Naive thymus-derived CD4-positive, alpha-beta T cell (primary cell): ENCODE measurements at regions of chr9 and their contacts with region 1.

Region 1: GRCh38 chr9:76393963-76394679 is at the start of gene RFK:
- DNase-seq: peak; percentile 89 to 99 (median 95)
- ATAC-seq: peak; percentile 97
- H3K4me3 ChIP-seq: peak within 1 kb of the TSS; percentile 92
- H3K4me3 Mint-ChIP-seq: peak within 1 kb of the TSS; percentile 94 to 100 (median 97)
- H3K27ac ChIP-seq: peak within 1 kb of the TSS; percentile 93
- H3K27ac Mint-ChIP-seq: peak within 1 kb of the TSS; percentile 95 to 99 (median 98)
- H3K4me1 ChIP-seq: peaks cover 10 to 13% of the 10 kb centered on the region in 2 donors
- H3K4me1 Mint-ChIP-seq: peaks cover 16 to 37% (median 33%) of the 10 kb centered on the region in 7 donors
- H3K27me3 ChIP-seq: no peaks in the 10 kb centered on the region
- H3K27me3 Mint-ChIP-seq: no peaks in the 10 kb centered on the region
- total RNA-seq, gene RFK: 6.8 to 18.6 (median 11.3) TPM

Region 2: DNA sequence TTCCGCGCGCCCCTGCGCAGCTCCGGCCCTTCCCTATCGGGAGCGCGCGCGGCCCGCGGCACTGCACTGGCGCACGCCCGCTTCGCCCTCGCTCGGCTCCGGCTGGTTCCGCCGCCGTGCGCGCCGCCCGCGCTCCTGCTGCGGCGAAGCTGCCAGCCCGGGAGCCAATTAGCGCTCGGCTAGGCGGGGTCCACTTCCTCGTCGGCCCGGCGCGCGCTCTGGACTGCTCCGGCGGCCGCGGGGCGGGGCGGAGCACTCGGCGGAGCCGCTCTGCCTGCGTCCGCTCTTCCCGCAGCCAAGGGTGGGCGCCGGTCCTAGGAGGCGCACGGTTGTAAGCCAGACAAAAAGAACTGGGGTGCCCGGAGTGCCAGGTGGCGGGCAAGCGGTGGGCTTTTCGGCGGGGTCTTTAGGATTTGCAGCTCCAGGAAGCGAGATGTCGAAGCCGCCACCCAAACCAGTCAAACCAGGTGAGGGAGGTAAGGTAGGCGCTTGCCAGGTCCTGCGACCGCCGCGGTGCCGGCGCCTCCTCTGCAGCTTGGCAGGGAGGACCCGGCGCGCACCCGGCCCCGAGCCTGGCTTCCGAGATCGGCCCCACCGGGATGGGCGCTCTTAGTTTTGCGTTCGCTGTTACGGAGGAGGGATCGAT is 1305.7 kb before region 1 on chr9 and contains the start of gene OSTF1:
- CTCF ChIA-PET with region 1: interaction called, 4 read pairs
- POLR2A ChIA-PET with region 1: no interaction called
- intact Hi-C with region 1: loop called (anchors 1 to 2 kb)
- DNase-seq: peak; percentile 89 to 95 (median 95)
- ATAC-seq: peak; percentile 93
- H3K4me3 ChIP-seq: peak within 1 kb of the TSS; percentile 76
- H3K4me3 Mint-ChIP-seq: peak within 1 kb of the TSS; percentile 89 to 100 (median 99)
- H3K27ac ChIP-seq: peak within 1 kb of the TSS; percentile 92
- H3K27ac Mint-ChIP-seq: peak within 1 kb of the TSS; percentile 91 to 98 (median 94)
- H3K4me1 ChIP-seq: peaks cover 29 to 49% of the 10 kb centered on the region in 2 donors
- H3K4me1 Mint-ChIP-seq: peaks cover 58 to 82% (median 78%) of the 10 kb centered on the region in 7 donors
- H3K27me3 ChIP-seq: no peaks in the 10 kb centered on the region
- H3K27me3 Mint-ChIP-seq: no peaks in the 10 kb centered on the region
- total RNA-seq, gene OSTF1: 38.7 to 93.5 (median 46.2) TPM

Region 3: DNA sequence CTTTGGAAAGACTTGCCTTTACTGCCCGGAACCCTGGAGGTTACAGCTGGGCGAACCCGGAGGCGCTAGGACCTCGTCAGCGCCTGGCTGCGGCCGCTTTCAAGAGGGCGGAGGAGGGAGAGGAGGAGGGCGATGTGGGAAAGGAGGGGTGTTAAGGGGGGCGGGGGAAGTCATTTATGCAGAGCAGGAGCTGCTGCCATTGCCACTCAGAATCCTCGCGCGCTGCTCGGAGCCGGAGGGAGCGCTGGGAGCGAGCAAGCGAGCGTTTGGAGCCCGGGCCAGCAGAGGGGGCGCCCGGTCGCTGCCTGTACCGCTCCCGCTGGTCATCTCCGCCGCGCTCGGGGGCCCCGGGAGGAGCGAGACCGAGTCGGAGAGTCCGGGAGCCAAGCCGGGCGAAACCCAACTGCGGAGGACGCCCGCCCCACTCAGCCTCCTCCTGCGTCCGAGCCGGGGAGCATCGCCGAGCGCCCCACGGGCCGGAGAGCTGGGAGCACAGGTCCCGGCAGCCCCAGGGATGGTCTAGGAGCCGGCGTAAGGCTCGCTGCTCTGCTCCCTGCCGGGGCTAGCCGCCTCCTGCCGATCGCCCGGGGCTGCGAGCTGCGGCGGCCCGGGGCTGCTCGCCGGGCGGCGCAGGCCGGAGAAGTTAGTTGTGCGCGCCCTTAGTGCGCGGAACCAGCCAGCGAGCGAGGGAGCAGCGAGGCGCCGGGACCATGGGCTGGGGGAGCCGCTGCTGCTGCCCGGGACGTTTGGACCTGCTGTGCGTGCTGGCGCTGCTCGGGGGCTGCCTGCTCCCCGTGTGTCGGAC is 503.4 kb before region 1 on chr9 and contains the start of gene PCSK5:
- CTCF ChIA-PET with region 1: no interaction called
- POLR2A ChIA-PET with region 1: interaction called, 8 read pairs
- intact Hi-C with region 1: loop called (anchors 1 kb)
- DNase-seq: peak; percentile 65 to 94 (median 90)
- ATAC-seq: peak; percentile 95
- H3K4me3 ChIP-seq: peak within 1 kb of the TSS; percentile 70
- H3K4me3 Mint-ChIP-seq: peak within 1 kb of the TSS; percentile 91 to 99 (median 97)
- H3K27ac ChIP-seq: peak within 1 kb of the TSS; percentile 77
- H3K27ac Mint-ChIP-seq: peak within 1 kb of the TSS; percentile 81 to 95 (median 90)
- H3K4me1 ChIP-seq: peaks cover 0 to 15% of the 10 kb centered on the region in 2 donors
- H3K4me1 Mint-ChIP-seq: peaks cover 35 to 59% (median 49%) of the 10 kb centered on the region in 7 donors
- H3K27me3 ChIP-seq: no peaks in the 10 kb centered on the region
- H3K27me3 Mint-ChIP-seq: peaks cover 0 to 50% (median 0%) of the 10 kb centered on the region in 5 donors
- total RNA-seq, gene PCSK5: 5.2 to 35.0 (median 24.6) TPM

Region 4: DNA sequence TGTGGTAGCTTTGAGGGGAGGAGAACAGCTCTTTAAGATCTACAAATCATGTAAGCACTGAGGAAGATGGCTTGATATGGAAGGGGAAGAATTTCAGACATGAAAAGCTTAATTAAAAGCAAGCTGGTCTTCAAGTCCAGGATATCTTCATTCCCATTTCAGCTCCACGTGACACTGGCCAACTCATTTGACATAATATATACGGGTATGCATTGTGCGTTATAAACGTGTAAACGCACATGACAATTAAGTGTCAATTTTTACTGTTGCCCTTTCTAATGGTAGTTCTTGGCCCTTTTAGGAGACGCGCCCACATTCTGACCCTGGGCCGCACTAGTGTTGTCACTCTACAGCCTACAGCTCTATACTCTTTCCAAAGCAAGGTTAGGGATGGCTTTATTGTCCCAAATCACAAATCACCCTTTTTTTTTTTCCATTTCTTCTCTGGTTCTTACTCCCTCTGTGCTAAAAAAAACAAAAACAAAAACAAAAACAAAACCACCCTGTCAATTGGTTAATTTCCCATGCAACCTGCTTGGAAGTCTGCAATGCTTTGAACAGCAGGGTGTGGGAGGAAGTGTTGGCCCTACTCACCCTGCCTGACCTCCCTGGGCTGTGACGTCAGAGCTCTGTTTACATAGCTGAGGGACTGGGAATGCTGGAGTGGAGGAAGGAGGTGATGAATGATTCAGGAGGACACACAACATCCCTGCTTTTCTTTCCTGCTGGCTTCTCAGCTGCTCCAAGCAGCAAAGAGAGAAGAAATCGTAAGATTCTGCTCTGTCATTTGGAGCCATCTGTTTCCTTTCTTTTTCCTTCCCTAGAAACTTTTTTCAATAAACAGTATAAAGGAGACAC is 19.2 kb before region 1 on chr9:
- CTCF ChIA-PET with region 1: no interaction called
- POLR2A ChIA-PET with region 1: no interaction called
- intact Hi-C with region 1: no loop called
- DNase-seq: no peak
- ATAC-seq: no peak
- H3K4me3 ChIP-seq: no peak overlapping the region
- H3K4me3 Mint-ChIP-seq: no peak overlapping the region
- H3K27ac ChIP-seq: no peak overlapping the region
- H3K27ac Mint-ChIP-seq: no peak overlapping the region
- H3K4me1 ChIP-seq: no peaks in the 10 kb centered on the region
- H3K4me1 Mint-ChIP-seq: peaks cover 0 to 3% (median 0%) of the 10 kb centered on the region in 7 donors
- H3K27me3 ChIP-seq: no peaks in the 10 kb centered on the region
- H3K27me3 Mint-ChIP-seq: peaks cover 0 to 3% (median 0%) of the 10 kb centered on the region in 5 donors

Region 5: DNA sequence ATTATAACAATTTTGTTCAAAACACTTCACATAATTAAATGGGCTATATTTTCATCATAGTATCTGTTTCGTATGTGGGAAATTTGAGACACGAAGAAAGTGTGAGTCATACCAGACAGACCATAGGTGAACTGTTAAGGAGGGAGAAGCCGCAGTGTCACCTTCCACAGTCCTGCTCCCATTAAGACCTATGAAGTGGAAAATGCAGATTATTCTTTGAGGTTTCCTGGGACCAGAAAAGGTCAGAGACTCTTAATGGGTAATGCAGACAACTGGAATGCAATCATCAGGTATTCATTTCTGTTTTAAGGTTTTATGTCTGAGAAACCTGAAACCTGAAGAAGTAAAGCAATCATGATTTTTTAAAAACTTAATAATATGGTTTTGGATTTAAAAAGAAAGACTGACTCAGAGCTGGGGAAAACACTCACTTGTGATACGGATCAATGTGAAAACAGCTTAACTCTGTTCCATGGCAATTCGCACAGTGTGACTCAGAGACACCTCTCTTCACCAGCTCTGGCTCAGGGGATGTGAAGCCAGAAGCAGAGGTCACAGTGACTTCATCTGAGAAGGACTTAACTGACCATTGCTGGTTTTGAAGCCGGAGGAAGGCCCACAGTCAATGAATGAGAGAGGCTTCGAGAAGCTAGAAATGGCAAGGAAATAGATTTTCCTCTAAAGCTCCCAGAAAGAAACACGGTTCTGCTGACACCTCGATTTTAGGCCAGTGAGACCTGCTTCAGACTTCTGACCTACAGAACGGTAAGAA is 47.6 kb after region 1 on chr9:
- CTCF ChIA-PET with region 1: interaction called, 4 read pairs
- POLR2A ChIA-PET with region 1: no interaction called
- intact Hi-C with region 1: loop called (anchors 2 kb)
- DNase-seq: peak in 1 of 9 donors; percentile 51
- ATAC-seq: no peak
- H3K4me3 ChIP-seq: no peak overlapping the region
- H3K4me3 Mint-ChIP-seq: peak overlapping the region in 1 of 10 donors; percentile 41
- H3K27ac ChIP-seq: no peak overlapping the region
- H3K27ac Mint-ChIP-seq: peak overlapping the region in 1 of 9 donors; percentile 79
- H3K4me1 ChIP-seq: no peaks in the 10 kb centered on the region
- H3K4me1 Mint-ChIP-seq: peaks cover 0 to 37% (median 0%) of the 10 kb centered on the region in 7 donors
- H3K27me3 ChIP-seq: no peaks in the 10 kb centered on the region
- H3K27me3 Mint-ChIP-seq: peaks cover 0 to 4% (median 0%) of the 10 kb centered on the region in 5 donors

Region 6: GRCh38 chr9:76651119-76651705 is 257.1 kb after region 1 on chr9:
- CTCF ChIA-PET with region 1: no interaction called
- POLR2A ChIA-PET with region 1: no interaction called
- intact Hi-C with region 1: loop called in 1 of 2 experiments (anchors 1 kb)
- DNase-seq: peak in 2 of 9 donors; percentile 14 to 27
- ATAC-seq: peak; percentile 66
- H3K4me3 ChIP-seq: peak overlapping the region; percentile 56
- H3K4me3 Mint-ChIP-seq: peak overlapping the region; percentile 58 to 88 (median 80)
- H3K27ac ChIP-seq: peak overlapping the region; percentile 48
- H3K27ac Mint-ChIP-seq: peak overlapping the region; percentile 8 to 85 (median 69)
- H3K4me1 ChIP-seq: peaks cover 8 to 11% of the 10 kb centered on the region in 2 donors
- H3K4me1 Mint-ChIP-seq: peaks cover 17 to 46% (median 30%) of the 10 kb centered on the region in 7 donors
- H3K27me3 ChIP-seq: no peaks in the 10 kb centered on the region
- H3K27me3 Mint-ChIP-seq: peaks cover 0 to 4% (median 0%) of the 10 kb centered on the region in 5 donors

Region 7: DNA sequence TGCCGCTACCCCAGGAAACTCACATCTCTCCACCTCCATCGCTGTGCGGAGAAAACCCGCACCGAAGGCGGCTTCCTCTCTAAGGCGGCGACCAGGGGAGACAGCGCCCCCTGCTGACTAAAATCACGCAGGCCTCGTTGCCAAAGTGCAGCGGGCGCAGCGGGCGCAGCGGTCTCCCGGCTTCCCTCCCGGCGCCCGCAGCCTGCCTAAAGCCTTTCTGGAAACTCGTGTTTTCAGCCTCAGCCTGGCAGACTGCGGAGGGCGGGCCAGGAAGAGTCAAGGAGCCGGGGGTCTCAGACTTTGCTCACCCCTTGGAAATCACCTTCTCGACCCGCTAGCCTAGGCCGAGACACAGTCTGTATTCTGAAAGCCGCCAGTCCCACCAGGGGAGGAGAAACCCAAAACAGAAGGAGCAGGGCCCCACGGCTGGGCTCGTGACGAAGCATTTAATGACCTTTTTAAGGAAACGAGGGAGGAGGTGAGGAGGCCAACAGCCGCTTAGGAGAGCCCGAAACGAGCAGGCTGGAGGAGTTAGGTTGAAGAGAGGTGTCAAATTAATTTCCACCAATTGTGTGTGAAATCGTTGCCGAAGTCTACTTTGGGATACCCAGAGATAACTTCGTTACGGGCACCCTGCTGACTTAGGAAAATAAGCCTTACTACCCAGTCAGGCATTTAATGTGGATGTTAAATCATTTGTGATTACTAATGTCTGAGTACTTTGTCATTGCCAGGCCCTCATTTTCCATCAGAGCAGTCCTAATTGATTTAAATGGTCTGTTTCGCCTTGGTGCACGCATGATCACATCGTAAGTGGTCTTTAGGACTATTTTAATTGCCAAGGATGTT is 618.1 kb after region 1 on chr9:
- CTCF ChIA-PET with region 1: no interaction called
- POLR2A ChIA-PET with region 1: no interaction called
- intact Hi-C with region 1: loop called in 1 of 2 experiments (anchors 1 kb)
- DNase-seq: peak; percentile 13 to 66 (median 38)
- ATAC-seq: peak; percentile 77
- H3K4me3 ChIP-seq: no peak overlapping the region
- H3K4me3 Mint-ChIP-seq: peak overlapping the region in 9 of 10 donors; percentile 12 to 61 (median 28)
- H3K27ac ChIP-seq: no peak overlapping the region
- H3K27ac Mint-ChIP-seq: peak overlapping the region in 1 of 9 donors; percentile 24
- H3K4me1 ChIP-seq: no peaks in the 10 kb centered on the region
- H3K4me1 Mint-ChIP-seq: peaks cover 4 to 24% (median 8%) of the 10 kb centered on the region in 7 donors
- H3K27me3 ChIP-seq: peaks cover 0 to 7% of the 10 kb centered on the region in 2 donors
- H3K27me3 Mint-ChIP-seq: peaks cover 63 to 78% (median 70%) of the 10 kb centered on the region in 5 donors